Right ventricle myocardium inferior (tissue), 1 donor: ENCODE measurements at regions of chr22 and their contacts with region 1.

Region 1: GRCh38 chr22:28297504-28297903 is 378.4 kb upstream of the PITPNB start:
- DNase-seq: no peak
- ATAC-seq: no peak

Region 2: GRCh38 chr22:28112548-28113043 is 184.9 kb before region 1 on chr22:
- intact Hi-C with region 1: loop called (anchors 5 kb)
- DNase-seq: peak; percentile 75
- ATAC-seq: peak; percentile 72